ENCODE measurements at regions of chr6 and their contacts with region 1.

Region 1: GRCh38 chr6:34791701-34792235 is at the start of gene BLTP3A:
- DNase-seq: peak; percentile 76
- ATAC-seq: peak; percentile 93
- H3K4me3 Mint-ChIP-seq: peak within 1 kb of the TSS; percentile 89
- H3K27ac Mint-ChIP-seq: peak within 1 kb of the TSS; percentile 91
- H3K4me1 Mint-ChIP-seq: peaks cover 22% of the 10 kb centered on the region
- H3K27me3 Mint-ChIP-seq: no peaks in the 10 kb centered on the region
- CTCF ChIP-seq: no peak
- total RNA-seq, gene BLTP3A: 14.0 to 15.0 TPM

Region 2: GRCh38 chr6:34560366-34561226 is 231.2 kb before region 1 on chr6:
- CTCF ChIA-PET with region 1: no interaction called
- POLR2A ChIA-PET with region 1: no interaction called
- intact Hi-C with region 1: no loop called
- DNase-seq: no peak
- ATAC-seq: no peak
- H3K4me3 Mint-ChIP-seq: no peak overlapping the region
- H3K27ac Mint-ChIP-seq: no peak overlapping the region
- H3K4me1 Mint-ChIP-seq: no peaks in the 10 kb centered on the region
- H3K27me3 Mint-ChIP-seq: no peaks in the 10 kb centered on the region
- CTCF ChIP-seq: no peak

Region 3: DNA sequence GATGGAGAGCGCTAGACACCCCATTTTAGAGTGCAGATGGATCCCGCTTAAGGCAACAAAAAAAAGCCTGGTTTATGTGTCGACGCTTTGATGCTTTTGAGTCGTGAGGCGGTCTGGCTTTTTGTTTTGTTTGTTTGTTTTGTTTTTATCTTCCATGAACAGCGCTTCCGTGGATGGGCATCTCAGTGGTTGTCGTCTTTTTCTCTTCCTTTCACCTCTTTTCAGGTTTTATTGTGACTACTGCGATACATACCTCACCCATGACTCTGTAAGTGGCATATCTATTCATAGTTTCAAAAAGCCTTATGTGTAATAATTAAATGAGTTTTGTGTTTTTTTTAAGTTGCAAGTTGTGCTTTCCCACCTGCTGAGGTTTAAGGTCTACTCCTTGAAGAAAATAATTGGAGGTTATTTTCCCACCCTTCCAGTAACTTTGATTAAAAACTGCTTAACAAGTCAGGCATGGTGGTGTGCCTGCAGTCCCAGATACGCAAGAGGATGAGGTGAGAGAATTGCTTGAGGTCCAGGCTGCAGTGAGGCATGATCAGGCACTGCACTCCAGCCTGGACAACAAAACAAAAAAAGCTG is 34.0 kb before region 1 on chr6:
- CTCF ChIA-PET with region 1: interaction called, 3 read pairs
- POLR2A ChIA-PET with region 1: interaction called, 23 read pairs
- intact Hi-C with region 1: no loop called
- DNase-seq: no peak
- ATAC-seq: no peak
- H3K4me3 Mint-ChIP-seq: no peak overlapping the region
- H3K27ac Mint-ChIP-seq: no peak overlapping the region
- H3K4me1 Mint-ChIP-seq: peaks cover 8% of the 10 kb centered on the region
- H3K27me3 Mint-ChIP-seq: no peaks in the 10 kb centered on the region
- CTCF ChIP-seq: no peak

Region 4: DNA sequence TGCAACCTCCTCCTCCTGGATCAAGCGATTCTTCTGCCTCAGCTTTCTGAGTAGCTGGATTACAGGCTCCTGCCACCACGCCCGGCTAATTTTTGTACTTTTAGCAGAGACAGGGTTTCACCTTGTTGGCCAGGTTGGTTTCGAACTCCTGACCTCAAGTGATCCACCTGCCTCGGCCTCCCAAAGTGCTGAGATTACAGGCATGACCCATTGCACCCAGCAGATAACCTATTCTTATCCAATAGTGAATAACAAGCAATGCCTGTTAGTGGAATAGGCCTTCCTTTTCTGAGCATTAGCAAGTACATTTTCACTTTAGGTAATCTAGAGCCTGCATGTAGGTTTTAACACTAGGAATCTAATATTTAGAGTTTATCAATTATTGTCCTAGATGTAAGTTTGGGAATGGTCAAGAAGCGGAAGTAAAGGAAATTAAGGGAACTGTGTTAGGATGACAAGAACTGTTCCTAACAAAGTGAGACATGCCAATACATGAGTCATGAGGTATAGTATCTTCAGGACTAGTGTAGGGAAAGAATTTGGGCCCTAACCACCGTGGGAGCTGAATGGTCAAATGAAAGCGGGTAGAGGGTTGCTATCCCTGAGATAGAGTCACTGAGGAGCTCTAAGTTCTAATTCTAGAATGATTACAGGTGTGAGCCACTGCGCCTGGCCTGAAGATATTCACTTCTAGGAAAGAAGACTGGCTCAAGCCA is 15.1 kb after region 1 on chr6:
- CTCF ChIA-PET with region 1: interaction called, 4 read pairs
- POLR2A ChIA-PET with region 1: interaction called, 21 read pairs
- intact Hi-C with region 1: no loop called
- DNase-seq: no peak
- ATAC-seq: no peak
- H3K4me3 Mint-ChIP-seq: no peak overlapping the region
- H3K27ac Mint-ChIP-seq: no peak overlapping the region
- H3K4me1 Mint-ChIP-seq: peaks cover 14% of the 10 kb centered on the region
- H3K27me3 Mint-ChIP-seq: no peaks in the 10 kb centered on the region
- CTCF ChIP-seq: no peak

Region 5: GRCh38 chr6:34887753-34888513 is 96.2 kb after region 1 on chr6 and contains the start of gene TAF11:
- CTCF ChIA-PET with region 1: interaction called, 3 read pairs
- POLR2A ChIA-PET with region 1: interaction called, 16 read pairs
- intact Hi-C with region 1: no loop called
- DNase-seq: peak; percentile 96
- ATAC-seq: peak; percentile 84
- H3K4me3 Mint-ChIP-seq: peak within 1 kb of the TSS; percentile 100
- H3K27ac Mint-ChIP-seq: peak within 1 kb of the TSS; percentile 99
- H3K4me1 Mint-ChIP-seq: peaks cover 34% of the 10 kb centered on the region
- H3K27me3 Mint-ChIP-seq: no peaks in the 10 kb centered on the region
- CTCF ChIP-seq: no peak
- total RNA-seq, gene TAF11: 29.3 to 29.4 TPM

Region 6: DNA sequence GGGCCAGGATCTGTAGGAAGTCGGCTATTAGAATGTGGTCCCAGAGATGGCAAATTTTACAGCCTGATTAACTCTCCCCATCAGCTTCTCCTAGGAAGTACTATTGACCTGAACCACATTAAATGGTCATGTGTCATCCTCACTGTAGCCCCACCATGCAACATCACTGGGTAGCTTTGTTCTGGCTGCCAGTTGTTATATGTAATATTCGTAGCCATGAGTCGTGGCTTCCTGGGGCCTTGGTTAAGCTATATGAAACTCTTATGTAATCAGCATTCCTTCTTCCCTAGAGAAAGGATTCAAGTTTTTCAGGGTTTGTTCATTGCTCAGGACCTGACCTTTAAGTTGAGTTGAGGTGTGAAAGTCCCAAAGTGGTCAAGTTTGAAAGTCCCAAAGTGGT is 223.0 kb after region 1 on chr6:
- CTCF ChIA-PET with region 1: no interaction called
- POLR2A ChIA-PET with region 1: no interaction called
- intact Hi-C with region 1: no loop called
- DNase-seq: no peak
- ATAC-seq: no peak
- H3K4me3 Mint-ChIP-seq: no peak overlapping the region
- H3K27ac Mint-ChIP-seq: no peak overlapping the region
- H3K4me1 Mint-ChIP-seq: peaks cover 11% of the 10 kb centered on the region
- H3K27me3 Mint-ChIP-seq: no peaks in the 10 kb centered on the region
- CTCF ChIP-seq: no peak

Measured in activated CD8-positive, alpha-beta T cell treated with anti-CD3 and anti-CD28 coated beads for 36 hours (primary cell).